RWPE1 (cell line): ENCODE measurements at regions of chr16 and their contacts with region 1.

Region 1: GRCh38 chr16:2142942-2143877 is 5.2 kb upstream of the RAB26 start:
- DNase-seq: no peak
- H3K27ac ChIP-seq: peak overlapping the region; percentile 8; the same call in 1 of the 2 replicates
- CTCF ChIP-seq: no peak

Region 2: DNA sequence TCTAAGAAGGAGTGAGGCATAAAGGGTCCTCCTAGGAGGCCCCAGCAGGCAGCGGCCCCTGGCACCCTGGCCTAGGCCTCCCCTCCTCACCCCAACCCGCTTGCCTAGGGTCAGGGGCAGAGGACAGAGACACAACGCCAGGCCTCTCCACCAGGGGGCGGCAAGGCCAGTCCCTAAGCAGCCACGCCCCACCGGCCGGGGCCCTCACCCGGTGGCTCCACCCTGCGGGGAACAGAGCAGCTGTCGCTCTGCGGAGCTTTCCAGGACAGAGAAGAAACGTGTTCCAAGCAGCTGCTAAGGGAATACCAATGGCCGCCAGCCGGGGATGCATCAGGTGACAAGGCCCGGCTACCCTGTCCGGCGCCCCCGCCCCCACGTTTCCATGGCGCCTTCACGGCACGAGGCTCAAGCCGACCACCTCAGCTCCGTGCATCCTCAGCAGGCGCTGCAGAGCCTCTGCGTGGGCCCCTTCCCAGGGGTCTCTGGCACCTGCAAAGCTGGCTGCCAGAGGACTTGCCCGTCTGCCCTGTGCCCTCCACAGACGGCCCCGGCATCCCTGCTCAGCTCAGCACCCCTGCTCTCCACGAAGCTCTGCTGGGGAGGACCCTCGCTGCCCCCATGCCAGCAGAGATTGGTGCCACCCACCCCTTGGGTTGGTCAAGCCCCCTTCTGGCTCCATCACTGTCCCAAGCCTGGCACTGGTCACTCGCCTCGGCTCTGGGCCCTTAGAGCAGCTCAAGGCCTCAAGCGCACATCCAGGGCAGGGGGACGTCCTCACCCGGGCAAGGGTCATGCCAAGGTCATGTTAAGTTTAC is 139.2 kb before region 1 on chr16:
- CTCF ChIA-PET with region 1: interaction called, 17 read pairs
- POLR2A ChIA-PET with region 1: interaction called, 3 read pairs
- DNase-seq: peak; percentile 59
- H3K27ac ChIP-seq: peak overlapping the region; percentile 98
- CTCF ChIP-seq: peak; percentile 88

Region 3: GRCh38 chr16:2121853-2122252 is 21.4 kb before region 1 on chr16:
- CTCF ChIA-PET with region 1: interaction called, 28 read pairs
- POLR2A ChIA-PET with region 1: no interaction called
- DNase-seq: no peak
- H3K27ac ChIP-seq: peak overlapping the region; percentile 99
- CTCF ChIP-seq: no peak